ENCODE measurements at regions of chr6 and their contacts with region 1.

Region 1: DNA sequence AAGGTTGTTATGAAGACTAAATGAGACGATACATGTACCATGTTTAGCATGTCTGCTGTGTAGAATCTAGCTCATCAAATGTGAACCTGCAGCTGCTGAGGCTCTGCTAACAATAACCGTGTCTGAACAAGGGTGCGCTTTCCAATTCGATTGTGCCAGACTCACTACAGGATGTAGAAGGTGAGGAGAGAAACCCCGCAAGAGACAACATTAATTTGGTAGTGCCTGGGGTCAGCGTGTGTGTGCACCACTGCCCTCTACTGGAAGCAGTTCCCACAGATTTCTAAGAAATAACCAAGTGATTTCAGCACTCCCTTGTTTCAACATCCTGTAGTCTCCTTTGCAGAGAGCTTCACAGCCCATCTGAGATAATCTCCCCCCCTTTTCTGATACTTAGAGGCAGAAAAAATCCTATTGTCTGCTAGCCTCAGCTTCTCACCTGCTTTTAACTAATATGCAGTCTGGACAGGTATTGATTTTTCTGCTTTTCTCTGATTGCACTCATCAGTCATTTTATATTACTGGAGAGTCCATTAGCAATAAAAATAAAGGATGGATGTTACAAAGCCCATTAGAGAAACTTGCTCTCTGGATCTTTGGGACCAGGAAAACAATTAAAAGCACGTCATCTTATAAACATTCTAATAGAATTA is 96.7 kb upstream of the BACH2 start:
- DNase-seq: peak; percentile 73 to 75 (median 73)
- H3K4me3 ChIP-seq: no peak overlapping the region
- H3K4me3 Mint-ChIP-seq: peak overlapping the region in 2 of 8 donors; percentile 23 to 24
- H3K27ac ChIP-seq: no peak overlapping the region
- H3K27ac Mint-ChIP-seq: peak overlapping the region in 4 of 7 donors; percentile 5 to 72 (median 38)
- H3K4me1 ChIP-seq: peaks cover 30% of the 10 kb centered on the region
- H3K4me1 Mint-ChIP-seq: peaks cover 22 to 40% (median 27%) of the 10 kb centered on the region in 4 donors
- H3K27me3 ChIP-seq: no peaks in the 10 kb centered on the region
- H3K27me3 Mint-ChIP-seq: no peaks in the 10 kb centered on the region

Region 2: DNA sequence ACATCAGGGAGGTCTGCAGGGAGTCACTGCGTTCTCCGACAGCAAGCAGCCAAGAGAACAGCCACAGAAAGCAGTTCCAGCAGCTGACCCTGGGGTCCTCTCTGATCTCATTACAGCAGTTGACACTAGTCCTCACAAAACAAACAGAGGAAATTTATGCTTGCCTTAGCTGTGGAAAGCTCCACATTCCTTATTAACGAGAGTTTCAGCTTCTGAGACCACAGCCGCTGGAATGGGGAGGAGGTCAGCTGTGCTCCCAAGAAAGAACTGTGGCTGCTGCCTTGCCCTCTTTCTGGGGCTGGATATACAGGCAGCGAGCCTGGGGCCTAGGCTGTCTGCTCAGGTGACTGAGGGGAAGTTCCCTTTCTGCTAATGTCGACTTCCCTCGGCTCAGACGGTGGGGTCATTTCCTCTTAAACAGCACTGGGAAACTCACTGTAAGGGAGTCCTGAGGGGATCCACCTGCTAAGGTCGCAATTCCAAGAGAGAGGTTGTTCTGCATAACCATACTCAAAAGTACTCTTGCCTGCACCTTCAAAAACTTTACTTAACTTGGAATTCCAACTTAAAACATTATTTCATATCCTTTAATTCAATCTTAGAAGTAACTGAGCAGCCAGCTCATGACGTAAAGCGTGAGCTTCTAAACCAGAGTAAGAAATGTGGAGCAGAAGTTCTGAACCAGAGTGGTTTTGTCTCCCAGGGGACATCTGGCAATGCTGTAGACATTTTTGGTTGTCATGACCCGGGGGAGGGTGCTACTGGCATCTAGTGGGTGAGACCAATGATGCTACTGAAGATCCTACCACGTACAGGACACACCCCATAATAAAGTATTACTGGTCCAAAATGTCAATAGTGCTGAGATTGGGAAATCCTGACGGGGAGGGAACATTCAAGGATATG is 177.0 kb before region 1 on chr6:
- CTCF ChIA-PET with region 1: interaction called, 12 read pairs
- POLR2A ChIA-PET with region 1: interaction called, 3 read pairs
- intact Hi-C with region 1: loop called (anchors 1 kb)
- DNase-seq: peak in 4 of 5 donors; percentile 11 to 73 (median 31)
- H3K4me3 ChIP-seq: no peak overlapping the region
- H3K4me3 Mint-ChIP-seq: peak overlapping the region in 5 of 8 donors; percentile 6 to 61 (median 35)
- H3K27ac ChIP-seq: peak overlapping the region; percentile 43
- H3K27ac Mint-ChIP-seq: peak overlapping the region in 3 of 7 donors; percentile 84 to 89 (median 86)
- H3K4me1 ChIP-seq: peaks cover 59% of the 10 kb centered on the region
- H3K4me1 Mint-ChIP-seq: peaks cover 27 to 30% (median 28%) of the 10 kb centered on the region in 4 donors
- H3K27me3 ChIP-seq: no peaks in the 10 kb centered on the region
- H3K27me3 Mint-ChIP-seq: no peaks in the 10 kb centered on the region

Region 3: GRCh38 chr6:90296346-90297114 is 96.8 kb before region 1 on chr6 and contains the start of gene BACH2:
- CTCF ChIA-PET with region 1: interaction called, 6 read pairs
- POLR2A ChIA-PET with region 1: interaction called, 4 read pairs
- intact Hi-C with region 1: loop called (anchors 1 kb)
- DNase-seq: peak; percentile 90 to 96 (median 92)
- H3K4me3 ChIP-seq: peak within 1 kb of the TSS; percentile 43 to 81
- H3K4me3 Mint-ChIP-seq: peak within 1 kb of the TSS; percentile 90 to 96 (median 93)
- H3K27ac ChIP-seq: peak within 1 kb of the TSS; percentile 65
- H3K27ac Mint-ChIP-seq: peak within 1 kb of the TSS; percentile 92 to 99 (median 97)
- H3K4me1 ChIP-seq: peaks cover 40% of the 10 kb centered on the region
- H3K4me1 Mint-ChIP-seq: peaks cover 14 to 40% (median 24%) of the 10 kb centered on the region in 4 donors
- H3K27me3 ChIP-seq: no peaks in the 10 kb centered on the region
- H3K27me3 Mint-ChIP-seq: peaks cover 0 to 4% of the 10 kb centered on the region in 2 donors
- total RNA-seq, gene BACH2: 44.4 to 48.0 TPM

Region 4: DNA sequence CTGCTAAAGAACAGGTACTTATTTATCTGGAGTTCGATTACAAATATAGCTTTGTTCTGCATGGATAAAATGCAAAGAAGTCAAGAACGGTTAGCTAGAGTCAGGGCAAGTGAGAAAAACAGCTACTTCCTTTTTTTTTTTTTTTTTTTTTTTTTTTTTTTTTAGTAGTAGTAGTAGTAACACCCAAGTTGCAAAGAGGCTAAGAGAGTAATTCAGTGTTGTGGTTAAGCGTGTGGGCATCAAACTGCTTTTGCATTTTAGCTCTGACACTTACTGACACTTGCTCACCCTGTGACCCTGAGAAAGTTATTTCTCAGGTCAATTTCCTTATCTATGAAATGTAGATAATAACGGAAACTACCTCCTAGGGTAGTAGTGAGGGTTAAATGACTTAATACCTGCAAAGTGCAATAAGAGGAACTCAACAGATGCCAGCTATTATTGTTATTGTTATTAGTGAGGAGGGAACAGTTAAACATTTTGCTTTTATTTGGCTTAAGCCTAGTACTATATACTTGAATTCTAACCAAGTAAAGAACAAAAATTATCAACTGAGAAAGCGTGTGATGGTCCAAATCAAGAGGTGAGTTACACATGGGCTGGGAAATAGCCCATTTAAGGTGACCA is 10.0 kb before region 1 on chr6:
- CTCF ChIA-PET with region 1: interaction called, 23 read pairs
- POLR2A ChIA-PET with region 1: interaction called, 4 read pairs
- intact Hi-C with region 1: no loop called
- DNase-seq: peak in 3 of 5 donors; percentile 10 to 32 (median 17)
- H3K4me3 ChIP-seq: no peak overlapping the region
- H3K4me3 Mint-ChIP-seq: peak overlapping the region in 1 of 8 donors; percentile 19
- H3K27ac ChIP-seq: no peak overlapping the region
- H3K27ac Mint-ChIP-seq: peak overlapping the region in 1 of 7 donors; percentile 41
- H3K4me1 ChIP-seq: peaks cover 6% of the 10 kb centered on the region
- H3K4me1 Mint-ChIP-seq: peaks cover 4 to 19% (median 11%) of the 10 kb centered on the region in 4 donors
- H3K27me3 ChIP-seq: peaks cover 4% of the 10 kb centered on the region
- H3K27me3 Mint-ChIP-seq: peaks cover 2 to 6% of the 10 kb centered on the region in 2 donors

Region 5: GRCh38 chr6:90413867-90414266 is 20.5 kb after region 1 on chr6:
- CTCF ChIA-PET with region 1: interaction called, 57 read pairs
- POLR2A ChIA-PET with region 1: interaction called, 198 read pairs
- intact Hi-C with region 1: loop called (anchors 2 kb)
- DNase-seq: peak; percentile 80 to 91 (median 86)
- H3K4me3 ChIP-seq: peak overlapping the region; percentile 25 to 30
- H3K4me3 Mint-ChIP-seq: peak overlapping the region; percentile 79 to 93 (median 84)
- H3K27ac ChIP-seq: peak overlapping the region; percentile 34
- H3K27ac Mint-ChIP-seq: peak overlapping the region; percentile 88 to 100 (median 96)
- H3K4me1 ChIP-seq: peaks cover 38% of the 10 kb centered on the region
- H3K4me1 Mint-ChIP-seq: peaks cover 31 to 62% (median 44%) of the 10 kb centered on the region in 4 donors
- H3K27me3 ChIP-seq: no peaks in the 10 kb centered on the region
- H3K27me3 Mint-ChIP-seq: peaks cover 2% of the 10 kb centered on the region in 2 donors

Region 6: GRCh38 chr6:90458353-90459224 is 65.2 kb after region 1 on chr6:
- CTCF ChIA-PET with region 1: interaction called, 28 read pairs
- POLR2A ChIA-PET with region 1: interaction called, 4 read pairs
- intact Hi-C with region 1: loop called (anchors 2 kb)
- DNase-seq: peak; percentile 36 to 91 (median 49)
- H3K4me3 ChIP-seq: peak overlapping the region; percentile 13 to 17
- H3K4me3 Mint-ChIP-seq: peak overlapping the region; percentile 25 to 86 (median 80)
- H3K27ac ChIP-seq: peak overlapping the region; percentile 19
- H3K27ac Mint-ChIP-seq: peak overlapping the region; percentile 76 to 92 (median 90)
- H3K4me1 ChIP-seq: peaks cover 59% of the 10 kb centered on the region
- H3K4me1 Mint-ChIP-seq: peaks cover 29 to 74% (median 51%) of the 10 kb centered on the region in 4 donors
- H3K27me3 ChIP-seq: no peaks in the 10 kb centered on the region
- H3K27me3 Mint-ChIP-seq: no peaks in the 10 kb centered on the region

Region 7: DNA sequence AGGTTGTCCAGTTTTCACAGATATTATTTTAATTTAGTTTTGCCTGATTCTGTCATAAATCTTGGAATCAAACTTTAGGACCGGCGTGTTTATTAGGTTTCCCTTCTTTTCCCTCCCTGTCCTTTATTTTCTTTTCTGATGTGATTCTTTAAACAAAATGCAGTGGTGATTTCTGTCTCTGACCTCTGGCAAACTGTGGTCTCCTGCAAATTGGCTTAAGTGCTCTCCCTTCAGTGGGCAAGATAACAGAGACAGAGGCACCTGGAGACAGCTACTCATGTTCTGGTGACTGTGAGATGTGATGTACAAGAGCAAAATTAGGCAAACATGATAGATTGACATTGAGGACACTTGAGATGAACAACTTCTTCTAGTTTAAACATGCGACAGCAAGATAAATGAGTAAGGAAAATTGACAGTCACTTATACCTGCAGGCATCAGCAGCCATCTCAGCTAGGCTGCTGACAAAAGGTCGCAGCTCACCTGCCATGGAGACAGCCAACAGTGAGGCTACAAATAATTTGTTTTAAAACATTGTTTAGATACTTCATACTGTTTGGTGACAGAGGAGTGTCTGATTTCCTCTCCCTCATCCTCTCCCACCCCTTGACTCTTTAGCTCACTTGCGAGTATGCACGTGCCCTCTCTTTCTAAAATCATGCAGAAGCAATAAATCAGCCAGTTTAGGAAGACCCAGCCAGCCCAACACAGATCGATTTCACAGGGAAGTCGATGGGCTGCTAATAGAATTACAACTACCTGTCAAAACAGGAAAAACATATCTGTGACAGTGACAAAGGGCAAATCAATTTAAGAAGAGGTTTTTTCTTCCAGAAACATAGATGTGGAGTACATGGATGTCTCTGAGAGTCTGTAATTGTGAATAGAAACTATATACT is 256.9 kb after region 1 on chr6:
- CTCF ChIA-PET with region 1: no interaction called
- POLR2A ChIA-PET with region 1: no interaction called
- intact Hi-C with region 1: no loop called
- DNase-seq: no peak
- H3K4me3 ChIP-seq: no peak overlapping the region
- H3K4me3 Mint-ChIP-seq: no peak overlapping the region
- H3K27ac ChIP-seq: no peak overlapping the region
- H3K27ac Mint-ChIP-seq: no peak overlapping the region
- H3K4me1 ChIP-seq: no peaks in the 10 kb centered on the region
- H3K4me1 Mint-ChIP-seq: no peaks in the 10 kb centered on the region
- H3K27me3 ChIP-seq: no peaks in the 10 kb centered on the region
- H3K27me3 Mint-ChIP-seq: peaks cover 11 to 28% of the 10 kb centered on the region in 2 donors

Region 8: GRCh38 chr6:91185072-91185471 is 791.7 kb after region 1 on chr6:
- CTCF ChIA-PET with region 1: no interaction called
- POLR2A ChIA-PET with region 1: no interaction called
- intact Hi-C with region 1: no loop called
- DNase-seq: no peak
- H3K4me3 ChIP-seq: no peak overlapping the region
- H3K4me3 Mint-ChIP-seq: no peak overlapping the region
- H3K27ac ChIP-seq: no peak overlapping the region
- H3K27ac Mint-ChIP-seq: no peak overlapping the region
- H3K4me1 ChIP-seq: no peaks in the 10 kb centered on the region
- H3K4me1 Mint-ChIP-seq: no peaks in the 10 kb centered on the region
- H3K27me3 ChIP-seq: no peaks in the 10 kb centered on the region
- H3K27me3 Mint-ChIP-seq: no peaks in the 10 kb centered on the region